Common myeloid progenitor, CD34-positive (primary cell): ENCODE measurements at regions of chr19 and their contacts with region 1.

Region 1: GRCh38 chr19:49118565-49119410 is at the start of gene C19orf73:
- DNase-seq: peak; percentile 95 to 98 (median 97)
- H3K4me3 ChIP-seq: peak within 1 kb of the TSS; percentile 45 to 81 (median 64)
- H3K27ac ChIP-seq: peak within 1 kb of the TSS; percentile 25 to 89
- H3K4me1 ChIP-seq: peaks cover 2 to 46% (median 33%) of the 10 kb centered on the region in 4 experiments
- H3K27me3 ChIP-seq: peaks cover 0 to 22% (median 11%) of the 10 kb centered on the region in 5 experiments

Region 2: DNA sequence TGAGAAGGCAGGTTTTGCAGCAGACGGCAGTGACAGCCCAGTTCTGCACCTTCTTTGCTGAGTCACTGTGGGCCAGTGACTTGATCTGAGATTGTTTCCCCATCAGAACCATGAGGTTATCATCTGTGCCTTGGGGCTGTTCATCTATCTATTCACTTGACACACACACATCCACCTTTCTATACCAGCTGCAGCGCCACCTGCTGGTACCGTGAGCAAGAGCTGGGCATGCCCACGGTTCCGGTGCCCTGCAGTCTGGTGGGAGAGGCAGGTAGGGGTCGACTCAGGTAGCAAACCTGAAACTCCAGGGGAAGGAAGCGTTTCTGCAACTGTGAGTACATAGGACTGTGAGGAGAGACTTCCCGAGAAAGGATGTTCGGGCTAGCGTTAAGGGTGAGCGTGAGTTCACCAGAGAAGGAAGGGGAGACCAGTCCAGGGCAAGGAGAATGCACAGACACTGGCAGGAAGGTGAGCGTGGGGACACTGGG is 12.1 kb before region 1 on chr19:
- CTCF ChIA-PET with region 1: interaction called, 21 read pairs
- POLR2A ChIA-PET with region 1: interaction called, 3 read pairs
- DNase-seq: peak; percentile 60 to 76 (median 69)
- H3K4me3 ChIP-seq: no peak overlapping the region
- H3K27ac ChIP-seq: no peak overlapping the region
- H3K4me1 ChIP-seq: no peaks in the 10 kb centered on the region
- H3K27me3 ChIP-seq: no peaks in the 10 kb centered on the region

Region 3: DNA sequence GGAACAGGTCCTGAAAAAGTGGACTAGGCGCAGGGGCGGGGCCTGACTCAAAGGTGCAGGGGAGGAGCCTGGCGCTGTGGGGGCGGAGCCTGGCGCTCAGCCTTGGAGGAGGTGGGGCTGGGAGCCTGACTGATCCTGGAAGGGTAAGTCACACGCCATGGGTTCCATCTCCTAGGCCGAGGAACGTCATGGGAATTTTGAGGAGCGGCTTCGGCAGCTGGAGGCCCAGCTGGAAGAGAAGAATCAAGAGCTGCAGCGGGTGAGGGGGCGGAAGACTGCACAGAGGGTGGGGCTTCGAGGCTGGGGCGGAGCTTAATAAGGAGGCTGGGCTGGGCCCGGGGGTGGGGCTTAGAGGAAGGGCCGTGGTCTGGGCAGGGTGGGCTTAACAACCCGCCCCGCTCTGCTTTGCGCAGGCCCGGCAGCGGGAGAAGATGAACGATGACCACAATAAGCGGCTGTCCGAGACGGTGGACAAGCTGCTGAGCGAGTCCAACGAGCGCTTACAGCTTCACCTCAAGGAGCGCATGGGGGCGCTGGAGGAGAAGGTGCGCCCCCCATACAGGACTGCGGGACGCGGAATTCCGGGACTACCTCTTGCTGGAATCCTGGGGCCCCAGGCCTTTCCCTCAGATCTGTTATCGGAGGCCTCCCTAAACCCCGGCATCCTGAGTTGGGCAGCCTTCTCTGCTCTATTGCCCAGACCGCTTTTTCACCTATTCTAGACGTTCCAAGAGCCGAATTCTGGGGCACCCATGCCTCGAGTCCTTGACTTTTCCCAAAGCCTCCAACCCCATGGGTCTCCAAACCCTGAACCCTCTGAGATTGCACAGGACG is 15.1 kb after region 1 on chr19:
- CTCF ChIA-PET with region 1: interaction called, 12 read pairs
- POLR2A ChIA-PET with region 1: no interaction called
- DNase-seq: peak; percentile 62 to 70 (median 63)
- H3K4me3 ChIP-seq: peak overlapping the region in 5 of 7 experiments; percentile 30 to 83 (median 61)
- H3K27ac ChIP-seq: no peak overlapping the region
- H3K4me1 ChIP-seq: peaks cover 0 to 19% (median 8%) of the 10 kb centered on the region in 4 experiments
- H3K27me3 ChIP-seq: peaks cover 0 to 5% (median 0%) of the 10 kb centered on the region in 5 experiments

Region 4: GRCh38 chr19:49165111-49165750 is 46.4 kb after region 1 on chr19:
- CTCF ChIA-PET with region 1: no interaction called
- POLR2A ChIA-PET with region 1: no interaction called
- DNase-seq: no peak
- H3K4me3 ChIP-seq: no peak overlapping the region
- H3K27ac ChIP-seq: no peak overlapping the region
- H3K4me1 ChIP-seq: no peaks in the 10 kb centered on the region
- H3K27me3 ChIP-seq: peaks cover 0 to 3% (median 0%) of the 10 kb centered on the region in 5 experiments

Region 5: GRCh38 chr19:49200238-49200862 is 81.6 kb after region 1 on chr19:
- CTCF ChIA-PET with region 1: interaction called, 11 read pairs
- POLR2A ChIA-PET with region 1: no interaction called
- DNase-seq: peak; percentile 15 to 27 (median 18)
- H3K4me3 ChIP-seq: no peak overlapping the region
- H3K27ac ChIP-seq: no peak overlapping the region
- H3K4me1 ChIP-seq: no peaks in the 10 kb centered on the region
- H3K27me3 ChIP-seq: no peaks in the 10 kb centered on the region